ENCODE measurements at regions of chr3 and their contacts with region 1.

Region 1: GRCh38 chr3:24680214-24680967 is 185.7 kb upstream of the THRB start:
- DNase-seq: peak; percentile 35 to 94 (median 66)

Region 2: GRCh38 chr3:23999012-23999641 is 681.3 kb before region 1 on chr3:
- intact Hi-C with region 1: loop called (anchors 2 kb)
- DNase-seq: peak; percentile 67 to 96 (median 86)

Region 3: DNA sequence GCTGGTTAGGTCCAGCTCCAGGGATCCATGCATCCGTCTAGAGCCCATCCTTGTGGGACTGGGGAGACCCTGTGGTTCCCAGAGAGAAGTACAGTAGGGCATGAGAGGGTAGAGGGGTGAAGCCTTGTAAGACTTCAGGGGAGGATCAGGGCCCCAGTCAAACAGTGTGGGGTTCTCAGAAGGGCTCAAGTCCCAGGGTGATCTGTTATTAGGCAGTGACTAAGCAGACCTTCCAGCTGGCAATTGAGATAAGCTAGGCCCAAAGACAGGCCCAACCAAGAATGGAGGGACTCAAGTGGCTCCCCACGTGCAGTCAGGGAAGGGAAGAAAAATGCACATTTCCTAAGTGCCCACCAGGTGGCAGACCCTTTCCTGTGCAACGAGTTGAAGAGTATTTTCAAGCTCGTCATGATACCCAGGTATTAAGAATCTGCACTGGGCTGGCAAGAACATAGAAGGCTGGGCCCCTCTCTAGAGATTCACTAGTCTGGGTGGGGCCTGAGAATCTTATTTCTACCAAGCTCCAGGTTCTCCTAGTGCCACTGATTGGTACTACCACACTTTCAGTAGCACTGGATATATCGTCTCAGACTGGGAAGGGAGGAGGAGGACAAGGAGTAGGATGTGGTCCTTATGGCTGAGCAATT is 494.5 kb before region 1 on chr3:
- intact Hi-C with region 1: loop called (anchors 10 kb)
- DNase-seq: peak in 6 of 10 donors; percentile 9 to 56 (median 42)

Region 4: GRCh38 chr3:24264748-24265158 is 415.6 kb before region 1 on chr3:
- intact Hi-C with region 1: loop called (anchors 5 kb)
- DNase-seq: no peak

Region 5: GRCh38 chr3:24494618-24495325 is 185.6 kb before region 1 on chr3 and contains the start of gene THRB:
- intact Hi-C with region 1: loop called (anchors 10 kb)
- DNase-seq: peak; percentile 48 to 95 (median 69)

Measured in posterior cingulate gyrus (tissue), 11 donors.